ENCODE measurements at regions of chr15 and their contacts with region 1.

Region 1: GRCh38 chr15:54289590-54290136 is 311.4 kb downstream of the UNC13C start:
- DNase-seq: peak; percentile 77
- ATAC-seq: peak; percentile 85
- H3K4me3 ChIP-seq: no peak overlapping the region
- H3K27ac ChIP-seq: no peak overlapping the region
- H3K4me1 ChIP-seq: no peaks in the 10 kb centered on the region
- H3K27me3 ChIP-seq: no peaks in the 10 kb centered on the region
- CTCF ChIP-seq: no peak
- EP300 ChIP-seq: peak; percentile 75 to 91; a peak in 3 of 4 replicates
- POLR2A ChIP-seq: no peak
- RAD21 ChIP-seq: no peak

Region 2: DNA sequence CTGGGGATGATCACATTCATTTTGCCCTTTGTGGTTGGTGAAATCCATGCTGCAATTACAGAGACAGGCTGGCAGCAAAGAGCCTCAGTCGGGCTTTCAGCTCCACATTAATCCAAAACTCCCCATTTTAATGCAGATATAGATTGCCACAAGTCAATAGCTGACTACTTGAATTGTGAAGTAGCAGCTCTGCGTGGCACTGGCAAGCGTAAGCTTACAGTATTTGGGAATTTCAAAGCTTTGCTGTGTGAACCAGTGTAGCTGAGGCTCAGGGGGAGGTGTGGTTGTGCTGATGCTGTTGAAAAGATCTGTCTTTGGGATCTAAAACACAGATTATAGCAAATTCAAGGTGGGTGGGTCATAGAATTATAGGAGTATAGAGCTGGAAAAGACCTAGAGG is 1209.2 kb before region 1 on chr15:
- CTCF ChIA-PET with region 1: no interaction called
- POLR2A ChIA-PET with region 1: no interaction called
- RAD21 ChIA-PET with region 1: no interaction called
- SMC1A ChIA-PET with region 1: no interaction called
- in situ Hi-C with region 1: no loop called
- intact Hi-C with region 1: no loop called
- DNase-seq: no peak
- ATAC-seq: no peak
- H3K4me3 ChIP-seq: no peak overlapping the region
- H3K27ac ChIP-seq: no peak overlapping the region
- H3K4me1 ChIP-seq: no peaks in the 10 kb centered on the region
- H3K27me3 ChIP-seq: no peaks in the 10 kb centered on the region
- CTCF ChIP-seq: no peak
- EP300 ChIP-seq: no peak
- POLR2A ChIP-seq: no peak
- RAD21 ChIP-seq: no peak

Region 3: GRCh38 chr15:53230473-53230872 is 1059.2 kb before region 1 on chr15:
- CTCF ChIA-PET with region 1: no interaction called
- POLR2A ChIA-PET with region 1: no interaction called
- RAD21 ChIA-PET with region 1: no interaction called
- SMC1A ChIA-PET with region 1: no interaction called
- in situ Hi-C with region 1: no loop called
- intact Hi-C with region 1: no loop called
- DNase-seq: no peak
- ATAC-seq: no peak
- H3K4me3 ChIP-seq: no peak overlapping the region
- H3K27ac ChIP-seq: no peak overlapping the region
- H3K4me1 ChIP-seq: no peaks in the 10 kb centered on the region
- H3K27me3 ChIP-seq: no peaks in the 10 kb centered on the region
- CTCF ChIP-seq: no peak
- EP300 ChIP-seq: no peak
- POLR2A ChIP-seq: no peak
- RAD21 ChIP-seq: no peak

Region 4: DNA sequence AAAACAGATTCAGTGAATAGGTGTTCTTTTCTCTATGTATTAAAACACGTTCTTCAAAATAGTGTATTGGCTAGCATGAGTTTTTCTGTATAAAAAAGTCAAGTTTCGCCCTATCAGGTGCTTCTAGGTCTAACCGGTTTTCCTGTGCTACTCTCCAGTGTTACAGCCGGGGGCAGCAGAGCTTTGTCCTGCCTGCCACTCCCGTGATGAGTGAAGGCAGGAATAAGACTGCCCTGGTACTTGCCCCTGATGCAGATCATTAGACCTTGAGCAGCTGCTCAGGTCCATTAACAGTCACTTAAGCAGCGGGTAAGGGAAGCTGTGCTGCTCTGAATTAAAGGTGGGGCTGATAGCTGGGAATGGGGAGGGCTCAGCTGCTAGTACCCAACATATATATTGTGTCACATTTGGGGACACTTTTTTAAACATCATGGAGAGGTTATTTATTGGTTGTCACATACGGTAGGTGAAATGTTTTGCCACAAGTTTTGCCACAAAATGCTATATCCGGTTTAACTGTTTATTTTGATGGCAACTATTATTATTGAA is 312.7 kb before region 1 on chr15:
- CTCF ChIA-PET with region 1: interaction called, 8 read pairs
- POLR2A ChIA-PET with region 1: no interaction called
- RAD21 ChIA-PET with region 1: interaction called, 11 read pairs
- SMC1A ChIA-PET with region 1: interaction called, 12 read pairs
- in situ Hi-C with region 1: no loop called
- intact Hi-C with region 1: loop called (anchors 5 kb)
- DNase-seq: no peak
- ATAC-seq: peak; percentile 72
- H3K4me3 ChIP-seq: no peak overlapping the region
- H3K27ac ChIP-seq: no peak overlapping the region
- H3K4me1 ChIP-seq: no peaks in the 10 kb centered on the region
- H3K27me3 ChIP-seq: no peaks in the 10 kb centered on the region
- CTCF ChIP-seq: peak in 2 of 3 experiments; percentile 34 to 62; a peak in 2 of 6 replicates
- EP300 ChIP-seq: no peak
- POLR2A ChIP-seq: no peak
- RAD21 ChIP-seq: peak; percentile 24; the same call in 1 of the 2 replicates

Region 5: DNA sequence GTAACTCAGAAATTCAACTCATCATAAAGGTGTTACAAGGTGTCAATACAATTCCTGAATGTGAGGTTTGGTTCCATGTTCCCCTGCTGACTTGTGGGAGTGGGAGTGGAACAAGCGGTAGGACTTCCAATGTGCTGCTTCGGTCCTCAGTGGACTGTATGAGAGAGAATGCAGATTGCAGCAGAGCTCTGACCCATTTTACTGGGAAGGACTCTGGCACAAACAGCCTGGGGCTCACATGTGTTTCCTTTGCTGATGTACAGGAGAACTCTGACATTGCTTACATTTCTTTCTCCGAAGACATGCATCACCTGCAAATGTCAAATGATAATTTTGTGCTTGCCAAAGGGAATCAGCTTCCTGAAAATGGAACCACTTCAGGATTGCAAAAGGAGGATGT is 199.9 kb before region 1 on chr15:
- CTCF ChIA-PET with region 1: interaction called, 35 read pairs
- POLR2A ChIA-PET with region 1: no interaction called
- RAD21 ChIA-PET with region 1: interaction called, 46 read pairs
- SMC1A ChIA-PET with region 1: interaction called, 24 read pairs
- in situ Hi-C with region 1: no loop called
- intact Hi-C with region 1: no loop called
- DNase-seq: no peak
- ATAC-seq: peak; percentile 16; the same call in 2 of the 3 replicates
- H3K4me3 ChIP-seq: no peak overlapping the region
- H3K27ac ChIP-seq: no peak overlapping the region
- H3K4me1 ChIP-seq: no peaks in the 10 kb centered on the region
- H3K27me3 ChIP-seq: no peaks in the 10 kb centered on the region
- CTCF ChIP-seq: no peak
- EP300 ChIP-seq: no peak
- POLR2A ChIP-seq: no peak
- RAD21 ChIP-seq: no peak

Region 6: DNA sequence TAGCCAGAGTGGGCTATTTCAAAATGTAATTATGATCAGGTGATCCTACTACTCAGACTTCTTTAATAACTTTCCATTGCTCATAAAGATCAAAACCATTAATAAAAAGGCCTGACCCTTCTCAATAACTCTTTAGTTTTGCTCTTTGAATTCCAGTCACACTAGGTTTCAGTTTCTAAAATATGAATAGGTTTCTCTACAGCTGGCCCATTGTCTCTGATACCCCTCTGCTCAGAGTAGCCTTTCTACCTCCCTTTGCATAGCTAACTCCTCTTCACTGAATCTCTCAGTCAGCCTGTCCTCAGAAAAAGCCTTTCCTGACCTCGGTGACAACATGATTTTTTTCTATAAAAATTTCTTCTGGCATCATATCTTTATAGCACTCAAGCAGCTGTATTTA is 102.3 kb before region 1 on chr15:
- CTCF ChIA-PET with region 1: no interaction called
- POLR2A ChIA-PET with region 1: no interaction called
- RAD21 ChIA-PET with region 1: no interaction called
- SMC1A ChIA-PET with region 1: no interaction called
- in situ Hi-C with region 1: no loop called
- intact Hi-C with region 1: no loop called
- DNase-seq: no peak
- ATAC-seq: peak; percentile 75
- H3K4me3 ChIP-seq: no peak overlapping the region
- H3K27ac ChIP-seq: no peak overlapping the region
- H3K4me1 ChIP-seq: no peaks in the 10 kb centered on the region
- H3K27me3 ChIP-seq: no peaks in the 10 kb centered on the region
- CTCF ChIP-seq: no peak
- EP300 ChIP-seq: no peak
- POLR2A ChIP-seq: no peak
- RAD21 ChIP-seq: no peak

Region 7: DNA sequence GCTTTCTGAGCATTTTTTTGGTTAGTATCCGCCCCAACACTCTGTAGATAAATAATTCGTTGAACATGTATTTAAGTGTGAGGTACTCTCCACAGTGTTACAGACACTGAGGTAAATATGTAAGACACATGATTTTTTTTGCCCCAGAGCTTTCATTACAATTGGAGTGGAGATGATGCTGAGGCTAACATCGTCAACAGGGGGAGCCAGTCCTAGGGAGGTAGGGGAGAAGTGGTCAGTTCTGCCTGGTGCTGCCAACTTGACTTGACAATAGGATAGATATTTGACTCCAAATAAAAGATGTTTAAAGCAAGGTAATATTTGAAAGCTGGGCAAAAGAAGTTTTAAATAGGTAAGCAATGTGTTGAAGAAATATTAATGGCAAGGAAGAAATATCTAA is 15.7 kb before region 1 on chr15:
- CTCF ChIA-PET with region 1: interaction called, 3 read pairs
- POLR2A ChIA-PET with region 1: no interaction called
- RAD21 ChIA-PET with region 1: interaction called, 7 read pairs
- SMC1A ChIA-PET with region 1: interaction called, 27 read pairs
- in situ Hi-C with region 1: no loop called
- intact Hi-C with region 1: no loop called
- DNase-seq: no peak
- ATAC-seq: no peak; the same call in 2 of the 3 replicates
- H3K4me3 ChIP-seq: no peak overlapping the region
- H3K27ac ChIP-seq: no peak overlapping the region
- H3K4me1 ChIP-seq: no peaks in the 10 kb centered on the region
- H3K27me3 ChIP-seq: no peaks in the 10 kb centered on the region
- CTCF ChIP-seq: peak in 1 of 3 experiments; percentile 6; a peak in 1 of 6 replicates
- EP300 ChIP-seq: no peak
- POLR2A ChIP-seq: no peak
- RAD21 ChIP-seq: 0 out of 2 replicates have a peak, but pooled peaks have one; percentile 2

Region 8: GRCh38 chr15:54387808-54388207 is 98.1 kb after region 1 on chr15:
- CTCF ChIA-PET with region 1: no interaction called
- POLR2A ChIA-PET with region 1: no interaction called
- RAD21 ChIA-PET with region 1: no interaction called
- SMC1A ChIA-PET with region 1: interaction called, 5 read pairs
- in situ Hi-C with region 1: no loop called
- intact Hi-C with region 1: loop called (anchors 5 kb)
- DNase-seq: no peak
- ATAC-seq: peak; percentile 35; the same call in 1 of the 3 replicates
- H3K4me3 ChIP-seq: no peak overlapping the region
- H3K27ac ChIP-seq: no peak overlapping the region
- H3K4me1 ChIP-seq: no peaks in the 10 kb centered on the region
- H3K27me3 ChIP-seq: no peaks in the 10 kb centered on the region
- CTCF ChIP-seq: no peak
- EP300 ChIP-seq: no peak
- POLR2A ChIP-seq: no peak
- RAD21 ChIP-seq: no peak

Region 9: DNA sequence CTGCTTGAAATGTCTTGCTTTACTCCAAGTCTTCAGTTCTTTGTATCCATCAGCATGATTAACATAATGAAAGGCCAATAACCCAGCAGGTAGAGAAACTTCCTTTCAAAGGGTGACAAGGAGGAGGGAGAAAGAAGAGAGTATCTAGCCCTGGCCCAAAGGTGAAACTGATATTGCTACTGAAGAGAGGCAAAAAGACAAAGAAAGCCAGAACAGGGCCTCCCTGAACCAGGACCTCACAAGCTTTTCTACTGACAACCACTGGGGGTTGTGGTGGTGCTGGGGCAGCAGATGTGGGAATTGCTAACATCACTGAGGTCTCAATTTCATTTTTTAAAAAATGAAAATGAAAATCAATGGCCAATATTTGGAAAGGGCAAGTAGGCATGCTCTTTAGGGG is 673.0 kb after region 1 on chr15:
- CTCF ChIA-PET with region 1: no interaction called
- POLR2A ChIA-PET with region 1: no interaction called
- RAD21 ChIA-PET with region 1: no interaction called
- SMC1A ChIA-PET with region 1: no interaction called
- in situ Hi-C with region 1: no loop called
- intact Hi-C with region 1: no loop called
- DNase-seq: no peak
- ATAC-seq: no peak
- H3K4me3 ChIP-seq: no peak overlapping the region
- H3K27ac ChIP-seq: no peak overlapping the region
- H3K4me1 ChIP-seq: no peaks in the 10 kb centered on the region
- H3K27me3 ChIP-seq: no peaks in the 10 kb centered on the region
- CTCF ChIP-seq: no peak
- EP300 ChIP-seq: no peak
- POLR2A ChIP-seq: no peak
- RAD21 ChIP-seq: no peak

Region 10: GRCh38 chr15:55108858-55109518 is 819.3 kb after region 1 on chr15:
- CTCF ChIA-PET with region 1: interaction called, 3 read pairs
- POLR2A ChIA-PET with region 1: no interaction called
- RAD21 ChIA-PET with region 1: interaction called, 3 read pairs
- SMC1A ChIA-PET with region 1: interaction called, 4 read pairs
- in situ Hi-C with region 1: no loop called
- intact Hi-C with region 1: loop called (anchors 10 kb)
- DNase-seq: peak; percentile 9
- ATAC-seq: peak; percentile 91
- H3K4me3 ChIP-seq: no peak overlapping the region
- H3K27ac ChIP-seq: no peak overlapping the region
- H3K4me1 ChIP-seq: no peaks in the 10 kb centered on the region
- H3K27me3 ChIP-seq: no peaks in the 10 kb centered on the region
- CTCF ChIP-seq: peak; percentile 74 to 83 (median 77)
- EP300 ChIP-seq: 0 out of 4 replicates have a peak, but pooled peaks of 1 of the 2 experiments have one; percentile 26
- POLR2A ChIP-seq: no peak
- RAD21 ChIP-seq: peak; percentile 70